ENCODE measurements at regions of chr9 and their contacts with region 1.

Region 1: GRCh38 chr9:1470001-1470804 is 420.0 kb downstream of the DMRT2 start:
- DNase-seq: no peak
- H3K4me3 Mint-ChIP-seq: no peak overlapping the region
- H3K27ac Mint-ChIP-seq: no peak overlapping the region
- H3K4me1 Mint-ChIP-seq: peaks cover 9% of the 10 kb centered on the region
- H3K27me3 Mint-ChIP-seq: peaks cover 2% of the 10 kb centered on the region

Region 2: GRCh38 chr9:976258-976942 is 493.8 kb before region 1 on chr9 and contains the start of gene DMRT3:
- CTCF ChIA-PET with region 1: no interaction called
- POLR2A ChIA-PET with region 1: no interaction called
- intact Hi-C with region 1: no loop called
- DNase-seq: no peak
- H3K4me3 Mint-ChIP-seq: peak within 1 kb of the TSS; percentile 3
- H3K27ac Mint-ChIP-seq: peak within 1 kb of the TSS; percentile 13
- H3K4me1 Mint-ChIP-seq: peaks cover 13% of the 10 kb centered on the region
- H3K27me3 Mint-ChIP-seq: peaks cover 68% of the 10 kb centered on the region
- total RNA-seq, gene DMRT3: not detected

Region 3: GRCh38 chr9:1404940-1405339 is 65.3 kb before region 1 on chr9:
- CTCF ChIA-PET with region 1: no interaction called
- POLR2A ChIA-PET with region 1: no interaction called
- intact Hi-C with region 1: no loop called
- DNase-seq: no peak
- H3K4me3 Mint-ChIP-seq: no peak overlapping the region
- H3K27ac Mint-ChIP-seq: no peak overlapping the region
- H3K4me1 Mint-ChIP-seq: no peaks in the 10 kb centered on the region
- H3K27me3 Mint-ChIP-seq: no peaks in the 10 kb centered on the region

Region 4: DNA sequence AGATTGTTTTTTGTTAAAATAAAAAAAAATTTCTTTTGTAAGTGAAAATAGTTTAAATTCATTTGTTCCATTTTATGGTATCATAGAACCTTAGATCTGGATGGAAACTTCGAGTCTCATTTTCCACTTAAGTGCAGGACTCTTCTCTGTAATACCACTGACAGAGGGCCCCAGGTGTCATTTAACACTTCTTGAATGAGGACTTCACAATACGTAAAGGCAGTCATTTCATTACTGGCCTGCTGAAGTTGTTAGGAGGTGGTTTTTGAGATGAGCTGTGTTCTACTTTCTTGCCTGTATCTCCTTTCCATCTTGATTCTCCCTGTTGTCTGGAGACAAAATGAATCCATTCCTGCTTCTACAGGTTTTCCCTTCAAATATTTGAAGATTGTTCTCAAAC is 35.3 kb after region 1 on chr9:
- CTCF ChIA-PET with region 1: no interaction called
- POLR2A ChIA-PET with region 1: interaction called, 3 read pairs
- intact Hi-C with region 1: loop called (anchors 5 kb)
- DNase-seq: peak; percentile 16
- H3K4me3 Mint-ChIP-seq: no peak overlapping the region
- H3K27ac Mint-ChIP-seq: no peak overlapping the region
- H3K4me1 Mint-ChIP-seq: peaks cover 7% of the 10 kb centered on the region
- H3K27me3 Mint-ChIP-seq: peaks cover 6% of the 10 kb centered on the region

Measured in activated CD4-positive, alpha-beta memory T cell treated with anti-CD3 and anti-CD28 coated beads for 36 hours (primary cell).